ENCODE measurements at regions of chr17 and their contacts with region 1.

Region 1: DNA sequence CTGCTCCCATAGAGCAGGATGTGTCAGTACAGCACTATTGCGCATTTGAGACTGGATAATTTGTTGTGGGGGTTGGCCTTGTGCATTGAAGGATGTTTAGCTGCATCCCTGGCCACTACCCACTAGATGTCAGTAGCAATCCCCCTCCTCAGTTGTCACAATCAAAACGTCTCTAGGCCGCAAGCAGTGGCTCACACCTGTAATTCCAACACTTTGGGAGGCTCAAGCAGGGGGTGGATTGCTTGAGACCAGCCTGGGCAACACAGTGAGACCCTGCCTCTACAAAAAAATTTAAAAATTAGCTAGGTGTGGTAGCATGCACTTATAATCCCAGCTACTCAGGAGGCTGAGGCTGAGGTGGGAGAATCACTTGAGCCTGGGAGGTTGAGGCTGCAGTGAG is 48.4 kb downstream of the CENPV start:
- ATAC-seq: peak in 7 of 8 experiments; percentile 27 to 99 (median 70)
- H3K4me3 ChIP-seq: no peak overlapping the region
- H3K27ac ChIP-seq: no peak overlapping the region
- H3K4me1 ChIP-seq: no peaks in the 10 kb centered on the region

Region 2: DNA sequence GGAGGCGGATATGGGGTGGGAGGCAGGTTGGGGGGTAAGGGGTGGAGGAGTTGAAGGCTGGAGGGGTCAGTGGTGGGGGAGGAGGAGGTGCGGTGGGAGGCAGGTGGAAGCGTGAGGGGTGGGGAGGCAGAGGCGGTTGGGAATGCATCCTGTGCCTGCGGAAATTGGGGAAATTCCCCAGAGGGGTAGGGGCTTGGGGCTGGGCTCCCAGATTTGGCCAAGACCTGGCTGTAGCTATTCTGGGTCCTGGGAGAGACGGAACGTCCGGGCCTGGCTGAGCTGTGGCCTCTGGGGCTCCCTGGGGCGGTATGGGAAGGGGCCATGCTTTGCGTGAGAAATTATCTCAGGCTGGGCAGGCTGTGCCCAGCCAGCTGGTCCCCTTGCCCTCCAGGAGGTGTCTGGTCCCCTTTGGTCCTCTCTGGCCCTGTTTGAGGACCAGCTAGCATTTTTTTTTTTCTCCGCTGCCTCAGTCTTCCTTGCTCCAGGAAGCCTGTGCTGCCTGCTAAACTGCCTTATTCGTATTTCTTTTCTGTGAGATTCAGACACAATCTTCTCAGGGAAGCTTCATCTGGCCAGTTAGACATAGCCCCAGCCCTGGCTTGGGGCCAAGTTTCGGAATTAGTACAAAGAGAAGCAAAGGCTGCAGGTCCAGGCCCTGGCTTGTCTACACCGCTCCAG is 103.2 kb after region 1 on chr17:
- in situ Hi-C with region 1: loop called in 1 of 9 experiments (anchors 25 kb)
- ATAC-seq: peak; percentile 35 to 66 (median 54)
- H3K4me3 ChIP-seq: peak overlapping the region in 2 of 5 donors; percentile 9 to 10
- H3K27ac ChIP-seq: peak overlapping the region in 1 of 2 donors; percentile 45
- H3K4me1 ChIP-seq: peaks cover 0 to 8% of the 10 kb centered on the region in 2 donors

Region 3: DNA sequence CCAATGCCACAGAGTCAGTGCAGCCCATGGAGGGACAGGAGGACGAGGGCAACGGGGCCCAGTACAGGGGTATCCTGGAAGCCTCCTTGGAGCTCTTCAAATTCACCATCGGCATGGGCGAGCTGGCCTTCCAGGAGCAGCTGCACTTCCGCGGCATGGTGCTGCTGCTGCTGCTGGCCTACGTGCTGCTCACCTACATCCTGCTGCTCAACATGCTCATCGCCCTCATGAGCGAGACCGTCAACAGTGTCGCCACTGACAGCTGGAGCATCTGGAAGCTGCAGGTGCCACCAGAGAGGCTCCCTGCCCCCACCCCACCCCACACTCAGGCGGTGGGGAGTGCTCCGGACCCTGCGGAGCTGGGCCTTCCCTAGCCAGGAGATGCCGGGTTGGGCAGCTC is 127.2 kb after region 1 on chr17:
- in situ Hi-C with region 1: no loop called
- ATAC-seq: no peak
- H3K4me3 ChIP-seq: no peak overlapping the region
- H3K27ac ChIP-seq: no peak overlapping the region
- H3K4me1 ChIP-seq: no peaks in the 10 kb centered on the region

Measured in motor neuron (in vitro differentiated cells).